CD14-positive monocyte (primary cell): ENCODE measurements at regions of chr4 and their contacts with region 1.

Region 1: DNA sequence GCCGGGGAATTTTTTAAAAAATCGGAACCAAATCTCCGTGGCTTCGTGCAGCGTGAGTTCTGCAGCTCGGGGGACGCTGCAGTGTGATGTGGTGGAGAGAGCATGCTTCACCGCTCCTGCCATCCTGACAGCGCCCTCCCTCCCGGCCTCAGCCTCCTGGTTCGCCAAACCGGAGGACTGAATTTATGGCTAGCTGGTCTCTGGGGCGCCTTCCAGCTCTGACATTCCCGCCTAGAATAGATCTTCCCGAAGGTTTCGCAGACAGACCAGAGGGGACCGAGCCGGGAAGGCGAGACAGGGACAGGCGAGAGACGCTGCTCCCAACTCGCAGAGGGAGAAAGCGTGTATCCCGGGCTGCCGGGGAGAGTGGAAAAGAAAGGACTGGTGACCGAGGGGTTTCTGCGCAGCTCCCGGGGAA is 25.9 kb downstream of the HOPX start:
- DNase-seq: peak in 2 of 3 donors; percentile 6 to 17
- H3K4me3 ChIP-seq: peak overlapping the region; percentile 42 to 74 (median 45)
- H3K4me3 Mint-ChIP-seq: peak overlapping the region; percentile 88 to 99
- H3K27ac ChIP-seq: no peak overlapping the region
- H3K27ac Mint-ChIP-seq: peak overlapping the region in 1 of 7 donors; percentile 15
- H3K4me1 ChIP-seq: peaks cover 36 to 67% of the 10 kb centered on the region in 2 donors
- H3K4me1 Mint-ChIP-seq: peaks cover 68% of the 10 kb centered on the region
- H3K27me3 ChIP-seq: peaks cover 42 to 48% of the 10 kb centered on the region in 2 donors
- H3K27me3 Mint-ChIP-seq: peaks cover 45 to 59% (median 50%) of the 10 kb centered on the region in 3 donors
- CTCF ChIP-seq: no peak

Region 2: GRCh38 chr4:56799824-56800756 is 144.9 kb after region 1 on chr4:
- intact Hi-C with region 1: loop called in 1 of 2 experiments (anchors 10 kb)
- DNase-seq: peak; percentile 64 to 76 (median 75)
- H3K4me3 ChIP-seq: peak overlapping the region; percentile 85 to 100 (median 92)
- H3K4me3 Mint-ChIP-seq: peak overlapping the region; percentile 98 to 100
- H3K27ac ChIP-seq: peak overlapping the region; percentile 8 to 75
- H3K27ac Mint-ChIP-seq: peak overlapping the region; percentile 81 to 92 (median 86)
- H3K4me1 ChIP-seq: peaks cover 5 to 6% of the 10 kb centered on the region in 2 donors
- H3K4me1 Mint-ChIP-seq: peaks cover 21% of the 10 kb centered on the region
- H3K27me3 ChIP-seq: no peaks in the 10 kb centered on the region
- H3K27me3 Mint-ChIP-seq: peaks cover 0 to 4% (median 1%) of the 10 kb centered on the region in 3 donors
- CTCF ChIP-seq: peak; percentile 89